Motor neuron (in vitro differentiated cells): ENCODE measurements at regions of chr13 and their contacts with region 1.

Region 1: DNA sequence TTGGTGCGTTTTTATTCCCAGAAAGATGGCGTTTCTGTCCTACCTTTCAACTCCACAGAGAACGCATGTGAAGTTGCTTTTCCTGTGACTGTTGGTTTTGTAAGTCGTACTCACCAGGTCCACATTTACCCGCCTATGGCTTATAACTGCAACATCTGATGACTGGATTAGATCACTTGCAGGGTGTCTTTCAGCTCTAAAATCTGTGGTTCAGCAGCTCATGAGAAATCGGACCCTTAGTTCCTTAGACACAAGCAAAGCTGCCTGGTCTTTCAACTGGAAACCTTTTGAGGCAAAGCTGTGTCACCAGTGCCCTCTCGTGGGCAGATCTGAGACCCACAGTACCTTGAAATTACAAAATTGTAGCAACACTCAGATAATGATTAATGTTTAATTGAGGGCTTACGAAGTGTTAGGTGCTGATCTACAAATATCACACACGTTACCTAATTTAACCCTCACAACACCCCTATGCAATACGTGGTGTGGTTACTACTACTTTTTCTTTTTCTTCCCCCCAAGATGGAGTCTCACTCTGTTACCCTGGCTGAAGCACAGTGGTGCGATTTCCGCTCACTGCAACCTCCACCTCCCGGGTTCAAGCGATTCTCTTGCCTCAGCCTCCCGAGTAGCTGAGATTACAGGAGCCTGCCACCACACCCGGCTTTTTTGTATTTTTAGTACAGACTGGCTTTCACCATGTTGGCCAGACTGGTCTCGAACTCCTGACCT is 65.4 kb downstream of the RUBCNL start:
- ATAC-seq: peak; percentile 46 to 82 (median 70)
- H3K4me3 ChIP-seq: no peak overlapping the region
- H3K27ac ChIP-seq: no peak overlapping the region
- H3K4me1 ChIP-seq: no peaks in the 10 kb centered on the region

Region 2: GRCh38 chr13:46146899-46147298 is 174.8 kb before region 1 on chr13:
- in situ Hi-C with region 1: loop called in 2 of 9 experiments (anchors 10 to 25 kb)
- ATAC-seq: peak; percentile 79 to 99 (median 92)
- H3K4me3 ChIP-seq: no peak overlapping the region
- H3K27ac ChIP-seq: no peak overlapping the region
- H3K4me1 ChIP-seq: peaks cover 14 to 31% of the 10 kb centered on the region in 2 donors

Region 3: GRCh38 chr13:46160471-46161066 is 161.1 kb before region 1 on chr13:
- in situ Hi-C with region 1: loop called in 1 of 9 experiments (anchors 25 kb)
- ATAC-seq: peak in 4 of 8 experiments; percentile 41 to 78 (median 72)
- H3K4me3 ChIP-seq: no peak overlapping the region
- H3K27ac ChIP-seq: no peak overlapping the region
- H3K4me1 ChIP-seq: no peaks in the 10 kb centered on the region

Region 4: GRCh38 chr13:46202188-46202795 is 119.4 kb before region 1 on chr13:
- in situ Hi-C with region 1: no loop called
- ATAC-seq: peak in 1 of 8 experiments; percentile 27
- H3K4me3 ChIP-seq: no peak overlapping the region
- H3K27ac ChIP-seq: no peak overlapping the region
- H3K4me1 ChIP-seq: no peaks in the 10 kb centered on the region